ENCODE measurements at regions of chr18 and their contacts with region 1.

Region 1: GRCh38 chr18:53070788-53071187 is 730.8 kb downstream of the DCC start:
- DNase-seq: no peak
- H3K4me3 ChIP-seq: no peak overlapping the region
- H3K27ac ChIP-seq: no peak overlapping the region
- H3K4me1 ChIP-seq: no peaks in the 10 kb centered on the region
- H3K27me3 ChIP-seq: no peaks in the 10 kb centered on the region
- CTCF ChIP-seq: no peak
- POLR2A ChIP-seq: no peak

Region 2: GRCh38 chr18:51559882-51560247 is 1510.9 kb before region 1 on chr18:
- intact Hi-C with region 1: loop called (anchors 10 kb)
- DNase-seq: no peak
- H3K4me3 ChIP-seq: no peak overlapping the region
- H3K27ac ChIP-seq: no peak overlapping the region
- H3K4me1 ChIP-seq: no peaks in the 10 kb centered on the region
- H3K27me3 ChIP-seq: no peaks in the 10 kb centered on the region
- CTCF ChIP-seq: no peak
- POLR2A ChIP-seq: no peak

Region 3: GRCh38 chr18:52992041-52992440 is 78.7 kb before region 1 on chr18:
- intact Hi-C with region 1: no loop called
- DNase-seq: no peak
- H3K4me3 ChIP-seq: no peak overlapping the region
- H3K27ac ChIP-seq: no peak overlapping the region
- H3K4me1 ChIP-seq: no peaks in the 10 kb centered on the region
- H3K27me3 ChIP-seq: no peaks in the 10 kb centered on the region
- CTCF ChIP-seq: no peak
- POLR2A ChIP-seq: no peak

Measured in breast epithelium (tissue), 4 donors.